ENCODE measurements at regions of chr18 and their contacts with region 1.

Region 1: GRCh38 chr18:72672364-72673184 is 128.4 kb upstream of the CBLN2 start:
- DNase-seq: peak; percentile 29
- H3K4me3 Mint-ChIP-seq: no peak overlapping the region
- H3K27ac Mint-ChIP-seq: no peak overlapping the region
- H3K4me1 Mint-ChIP-seq: no peaks in the 10 kb centered on the region
- H3K27me3 Mint-ChIP-seq: no peaks in the 10 kb centered on the region
- CTCF ChIP-seq: peak; percentile 71

Region 2: GRCh38 chr18:72456802-72457201 is 215.8 kb before region 1 on chr18:
- CTCF ChIA-PET with region 1: no interaction called
- intact Hi-C with region 1: no loop called
- DNase-seq: no peak
- H3K4me3 Mint-ChIP-seq: no peak overlapping the region
- H3K27ac Mint-ChIP-seq: no peak overlapping the region
- H3K4me1 Mint-ChIP-seq: peaks cover 36% of the 10 kb centered on the region
- H3K27me3 Mint-ChIP-seq: no peaks in the 10 kb centered on the region
- CTCF ChIP-seq: no peak

Region 3: DNA sequence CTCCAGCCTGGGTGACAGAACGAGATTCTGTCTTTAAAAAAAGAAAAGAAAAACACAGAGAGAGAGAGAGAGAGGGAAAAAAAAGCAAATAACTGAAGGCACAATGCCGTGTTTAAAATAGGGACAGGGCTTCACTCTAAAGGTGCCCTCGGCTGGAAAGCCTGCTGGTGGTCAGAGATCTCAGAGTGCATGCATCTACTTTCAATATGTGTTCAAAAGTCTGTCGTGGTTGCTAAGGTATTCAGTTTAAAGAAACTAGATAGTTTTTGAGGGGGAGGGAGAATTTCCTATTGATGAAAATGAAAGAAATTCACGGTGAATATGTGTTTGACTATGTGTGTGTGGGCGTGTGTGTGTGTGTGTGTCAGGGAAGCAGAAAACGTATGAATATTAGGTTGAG is 117.5 kb before region 1 on chr18:
- CTCF ChIA-PET with region 1: no interaction called
- intact Hi-C with region 1: loop called (anchors 5 kb)
- DNase-seq: peak; percentile 15
- H3K4me3 Mint-ChIP-seq: peak overlapping the region; percentile 54
- H3K27ac Mint-ChIP-seq: peak overlapping the region; percentile 27
- H3K4me1 Mint-ChIP-seq: peaks cover 23% of the 10 kb centered on the region
- H3K27me3 Mint-ChIP-seq: no peaks in the 10 kb centered on the region
- CTCF ChIP-seq: no peak

Region 4: GRCh38 chr18:72652990-72653593 is 19.5 kb before region 1 on chr18:
- CTCF ChIA-PET with region 1: no interaction called
- intact Hi-C with region 1: loop called (anchors 1 kb)
- DNase-seq: peak; percentile 56
- H3K4me3 Mint-ChIP-seq: no peak overlapping the region
- H3K27ac Mint-ChIP-seq: no peak overlapping the region
- H3K4me1 Mint-ChIP-seq: no peaks in the 10 kb centered on the region
- H3K27me3 Mint-ChIP-seq: no peaks in the 10 kb centered on the region
- CTCF ChIP-seq: peak; percentile 41

Region 5: GRCh38 chr18:72692086-72692485 is 19.5 kb after region 1 on chr18:
- CTCF ChIA-PET with region 1: no interaction called
- intact Hi-C with region 1: no loop called
- DNase-seq: peak; percentile 53
- H3K4me3 Mint-ChIP-seq: peak overlapping the region; percentile 73
- H3K27ac Mint-ChIP-seq: no peak overlapping the region
- H3K4me1 Mint-ChIP-seq: peaks cover 28% of the 10 kb centered on the region
- H3K27me3 Mint-ChIP-seq: no peaks in the 10 kb centered on the region
- CTCF ChIP-seq: no peak

Region 6: GRCh38 chr18:72866901-72867701 is 194.5 kb after region 1 on chr18:
- CTCF ChIA-PET with region 1: no interaction called
- intact Hi-C with region 1: no loop called
- DNase-seq: no peak
- H3K4me3 Mint-ChIP-seq: no peak overlapping the region
- H3K27ac Mint-ChIP-seq: no peak overlapping the region
- H3K4me1 Mint-ChIP-seq: no peaks in the 10 kb centered on the region
- H3K27me3 Mint-ChIP-seq: no peaks in the 10 kb centered on the region
- CTCF ChIP-seq: no peak

Region 7: DNA sequence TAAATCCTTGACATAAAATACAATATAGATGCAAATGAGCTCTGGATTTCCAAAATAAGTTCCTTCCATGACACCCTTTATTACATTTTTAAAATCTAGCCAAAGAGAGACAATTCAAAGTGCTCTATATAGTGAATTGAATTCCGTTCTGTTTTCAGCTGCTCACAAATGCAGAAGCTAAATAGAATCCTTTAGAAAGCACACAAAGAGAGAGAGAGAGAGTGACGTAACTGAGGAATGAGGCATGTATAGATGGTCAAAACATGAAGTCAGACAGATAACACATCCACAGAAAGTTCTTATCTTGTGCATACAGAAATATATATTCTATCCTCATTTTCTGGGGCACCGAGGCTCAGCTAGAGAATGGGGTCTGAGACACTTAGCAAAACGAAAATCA is 539.9 kb after region 1 on chr18:
- CTCF ChIA-PET with region 1: no interaction called
- intact Hi-C with region 1: no loop called
- DNase-seq: no peak
- H3K4me3 Mint-ChIP-seq: no peak overlapping the region
- H3K27ac Mint-ChIP-seq: no peak overlapping the region
- H3K4me1 Mint-ChIP-seq: no peaks in the 10 kb centered on the region
- H3K27me3 Mint-ChIP-seq: no peaks in the 10 kb centered on the region
- CTCF ChIP-seq: no peak